Cardiac septum (tissue), 1 donor: ENCODE measurements at regions of chr7 and their contacts with region 1.

Region 1: GRCh38 chr7:100889761-100890634 is 483 bp upstream of the UFSP1 start:
- DNase-seq: peak; percentile 98

Region 2: DNA sequence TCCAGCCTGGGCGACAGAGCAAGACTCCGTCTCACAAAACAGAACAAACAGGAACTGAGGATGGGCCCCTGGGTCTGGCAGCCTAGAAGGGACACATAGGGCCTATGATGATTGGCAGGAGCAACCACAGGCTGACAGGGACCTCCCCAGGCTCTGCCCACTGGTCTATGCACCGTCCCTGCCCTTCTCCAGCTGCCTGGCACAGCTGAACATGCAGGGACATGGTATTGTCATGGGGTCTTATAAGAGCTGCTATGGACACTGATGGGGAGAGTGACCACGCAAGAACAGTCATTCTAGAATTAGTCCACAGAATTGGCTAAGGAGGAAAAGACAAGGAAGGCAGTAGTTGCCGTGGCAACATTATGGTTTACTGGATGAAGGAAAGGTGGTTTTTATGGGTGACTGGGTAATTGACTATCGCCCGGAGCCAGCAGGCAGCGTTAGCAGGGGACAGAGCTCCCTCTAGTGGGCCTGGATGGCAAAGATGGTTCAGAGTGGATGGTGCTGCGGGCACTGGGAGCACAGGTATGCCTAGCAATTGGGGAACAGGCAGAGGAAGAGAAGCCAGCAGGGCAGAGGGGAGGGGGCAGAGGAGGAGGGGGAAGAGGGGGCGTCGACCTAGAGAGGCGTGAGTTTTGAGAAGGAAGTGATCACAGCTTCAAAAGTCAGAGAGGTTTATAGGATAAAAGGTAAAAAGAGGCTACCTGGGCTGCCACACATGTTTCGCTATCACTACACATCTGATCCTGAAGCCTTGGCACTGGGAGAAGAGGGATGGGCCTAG is 187.5 kb after region 1 on chr7:
- intact Hi-C with region 1: loop called (anchors 5 kb)
- DNase-seq: no peak

Region 3: DNA sequence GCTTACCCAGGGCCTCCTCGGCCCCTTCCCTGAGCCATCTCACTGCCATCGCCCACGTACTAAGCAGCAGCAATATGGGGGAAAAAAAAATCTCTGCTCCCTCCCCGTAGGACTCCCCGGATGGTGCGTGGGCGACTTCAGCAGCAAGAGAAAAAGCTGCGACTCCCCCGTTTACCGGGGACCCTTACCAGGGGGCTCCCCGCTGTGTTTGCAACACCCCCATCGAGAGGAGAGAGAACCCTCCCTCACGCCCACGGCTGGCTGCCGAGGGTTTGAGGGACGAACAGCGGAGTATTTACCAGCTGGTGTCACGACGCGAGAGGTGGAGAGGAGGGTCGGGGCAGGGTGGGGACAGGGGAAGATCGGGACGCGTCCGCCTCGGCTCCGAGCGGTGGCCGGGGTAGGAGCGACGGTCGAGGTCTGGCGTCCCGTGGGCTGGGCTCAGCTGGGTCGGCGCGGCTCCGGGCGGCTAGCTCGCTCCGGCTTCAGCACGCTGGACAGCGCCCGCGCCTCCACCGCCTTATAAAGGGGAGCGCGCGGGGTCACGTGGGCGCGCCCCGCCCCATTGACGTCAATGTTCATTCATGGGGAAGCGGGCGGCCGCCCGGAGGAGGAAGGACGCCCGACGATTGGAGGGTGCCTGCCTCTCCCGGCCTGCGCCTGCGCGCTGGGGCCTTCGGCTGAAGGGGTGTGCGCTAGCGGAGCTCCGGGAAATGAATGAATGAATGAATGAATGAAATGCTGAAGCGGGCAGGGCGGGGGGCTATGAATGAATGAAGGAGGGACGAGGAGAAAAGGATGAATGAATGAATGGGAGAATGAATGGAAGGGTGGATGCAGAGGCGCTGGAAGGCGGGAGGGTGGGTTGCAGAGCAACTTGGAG is 275.3 kb after region 1 on chr7 and contains the start of gene VGF:
- intact Hi-C with region 1: loop called (anchors 10 kb)
- DNase-seq: peak; percentile 95
- total RNA-seq, gene VGF: 0.08 TPM